ENCODE measurements at regions of chr17 and their contacts with region 1.

Region 1: DNA sequence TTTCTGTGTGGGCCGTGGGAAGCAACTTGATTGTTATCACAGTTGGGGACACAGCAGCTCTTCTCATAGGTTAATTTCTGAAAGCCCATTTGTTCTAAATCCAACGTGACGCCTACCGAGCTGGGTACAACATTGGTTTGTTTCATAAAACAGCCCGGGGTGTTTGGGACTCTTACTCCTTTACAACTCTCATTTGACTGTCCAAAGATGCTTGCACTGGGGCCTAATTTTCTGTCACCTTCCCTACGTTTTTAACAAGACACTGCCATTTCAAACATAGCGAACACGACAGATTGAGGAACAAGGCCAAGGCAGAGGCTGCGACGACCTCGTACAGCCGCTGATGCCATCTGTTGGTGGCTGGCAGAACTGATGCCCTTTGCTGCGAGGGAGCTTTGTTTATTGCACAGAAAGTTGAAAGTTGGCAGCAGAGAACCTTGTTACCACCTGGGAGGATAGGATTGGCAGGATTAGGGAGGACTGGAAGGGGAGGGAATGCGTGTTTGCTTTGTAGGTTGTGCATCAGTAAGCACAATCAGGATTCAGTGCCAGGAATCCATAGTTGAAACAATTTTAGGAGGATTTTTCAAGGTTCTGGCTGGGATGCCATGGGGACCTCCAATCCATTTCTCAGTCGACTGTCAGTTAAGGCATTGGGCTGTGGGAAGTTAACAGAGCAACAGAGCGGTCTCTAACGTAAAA is 98.3 kb downstream of the PITPNC1 start:
- DNase-seq: peak; percentile 79 to 94 (median 84)
- ATAC-seq: peak; percentile 86
- H3K4me3 ChIP-seq: peak overlapping the region; percentile 35
- H3K4me3 Mint-ChIP-seq: peak overlapping the region; percentile 74
- H3K27ac ChIP-seq: peak overlapping the region; percentile 66 to 73
- H3K27ac Mint-ChIP-seq: peak overlapping the region; percentile 96
- H3K4me1 ChIP-seq: peaks cover 64% of the 10 kb centered on the region
- H3K4me1 Mint-ChIP-seq: peaks cover 66% of the 10 kb centered on the region
- H3K27me3 ChIP-seq: no peaks in the 10 kb centered on the region
- H3K27me3 Mint-ChIP-seq: no peaks in the 10 kb centered on the region
- CTCF ChIP-seq: peak; percentile 96

Region 2: GRCh38 chr17:67151717-67152116 is 323.7 kb before region 1 on chr17:
- CTCF ChIA-PET with region 1: no interaction called
- POLR2A ChIA-PET with region 1: no interaction called
- intact Hi-C with region 1: no loop called
- DNase-seq: no peak
- ATAC-seq: no peak
- H3K4me3 ChIP-seq: no peak overlapping the region
- H3K4me3 Mint-ChIP-seq: no peak overlapping the region
- H3K27ac ChIP-seq: no peak overlapping the region
- H3K27ac Mint-ChIP-seq: no peak overlapping the region
- H3K4me1 ChIP-seq: no peaks in the 10 kb centered on the region
- H3K4me1 Mint-ChIP-seq: peaks cover 4% of the 10 kb centered on the region
- H3K27me3 ChIP-seq: no peaks in the 10 kb centered on the region
- H3K27me3 Mint-ChIP-seq: no peaks in the 10 kb centered on the region
- CTCF ChIP-seq: no peak

Region 3: GRCh38 chr17:67400193-67400592 is 75.2 kb before region 1 on chr17:
- CTCF ChIA-PET with region 1: interaction called, 15 read pairs
- POLR2A ChIA-PET with region 1: interaction called, 11 read pairs
- intact Hi-C with region 1: no loop called
- DNase-seq: peak in 4 of 14 experiments; percentile 34 to 72 (median 60)
- ATAC-seq: peak; percentile 50
- H3K4me3 ChIP-seq: no peak overlapping the region
- H3K4me3 Mint-ChIP-seq: peak overlapping the region; percentile 65
- H3K27ac ChIP-seq: peak overlapping the region; percentile 31 to 77
- H3K27ac Mint-ChIP-seq: peak overlapping the region; percentile 99
- H3K4me1 ChIP-seq: peaks cover 52% of the 10 kb centered on the region
- H3K4me1 Mint-ChIP-seq: peaks cover 77% of the 10 kb centered on the region
- H3K27me3 ChIP-seq: no peaks in the 10 kb centered on the region
- H3K27me3 Mint-ChIP-seq: no peaks in the 10 kb centered on the region
- CTCF ChIP-seq: no peak

Region 4: DNA sequence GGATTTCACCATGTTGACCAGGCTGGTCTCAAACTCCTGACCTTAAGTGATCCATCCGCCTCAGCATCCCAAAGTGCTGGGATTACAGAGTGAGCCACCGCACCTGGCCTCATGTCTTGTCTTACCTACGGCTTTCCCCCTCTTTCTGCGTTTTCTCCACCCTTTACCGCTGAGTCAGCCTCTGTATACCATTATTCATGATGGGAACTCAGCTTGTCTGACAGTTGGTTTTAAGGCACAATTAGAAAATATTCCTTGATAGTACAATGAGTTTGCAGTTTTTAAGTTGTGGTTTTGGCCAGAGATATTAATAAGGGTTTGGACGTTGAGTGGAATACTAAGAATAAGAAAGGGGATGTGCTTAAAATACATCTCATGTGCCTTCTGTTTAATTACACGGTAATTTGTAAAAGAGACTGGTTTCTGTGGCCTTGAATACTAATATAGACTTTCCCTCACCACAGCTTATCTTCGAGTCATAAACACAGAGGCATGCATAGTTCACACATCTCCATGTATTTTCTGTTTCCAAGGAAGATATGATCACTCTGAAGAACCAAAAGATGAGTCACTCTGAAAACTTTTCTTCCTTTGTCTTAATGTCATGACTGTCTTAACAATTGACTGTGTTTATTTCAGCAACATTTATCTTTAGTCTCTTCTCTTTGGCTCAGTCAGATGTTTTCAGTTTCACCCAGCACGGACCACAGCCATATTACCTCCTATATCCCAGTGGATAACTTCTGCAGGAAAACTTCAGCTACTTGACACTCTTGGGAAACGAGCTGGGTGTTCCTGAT is 43.9 kb before region 1 on chr17:
- CTCF ChIA-PET with region 1: interaction called, 42 read pairs
- POLR2A ChIA-PET with region 1: interaction called, 20 read pairs
- intact Hi-C with region 1: loop called in 1 of 2 experiments (anchors 10 kb)
- DNase-seq: peak in 3 of 14 experiments; percentile 41 to 56 (median 45)
- ATAC-seq: peak; percentile 5
- H3K4me3 ChIP-seq: no peak overlapping the region
- H3K4me3 Mint-ChIP-seq: peak overlapping the region; percentile 8
- H3K27ac ChIP-seq: no peak overlapping the region
- H3K27ac Mint-ChIP-seq: peak overlapping the region; percentile 91
- H3K4me1 ChIP-seq: peaks cover 59% of the 10 kb centered on the region
- H3K4me1 Mint-ChIP-seq: peaks cover 82% of the 10 kb centered on the region
- H3K27me3 ChIP-seq: no peaks in the 10 kb centered on the region
- H3K27me3 Mint-ChIP-seq: no peaks in the 10 kb centered on the region
- CTCF ChIP-seq: no peak

Region 5: DNA sequence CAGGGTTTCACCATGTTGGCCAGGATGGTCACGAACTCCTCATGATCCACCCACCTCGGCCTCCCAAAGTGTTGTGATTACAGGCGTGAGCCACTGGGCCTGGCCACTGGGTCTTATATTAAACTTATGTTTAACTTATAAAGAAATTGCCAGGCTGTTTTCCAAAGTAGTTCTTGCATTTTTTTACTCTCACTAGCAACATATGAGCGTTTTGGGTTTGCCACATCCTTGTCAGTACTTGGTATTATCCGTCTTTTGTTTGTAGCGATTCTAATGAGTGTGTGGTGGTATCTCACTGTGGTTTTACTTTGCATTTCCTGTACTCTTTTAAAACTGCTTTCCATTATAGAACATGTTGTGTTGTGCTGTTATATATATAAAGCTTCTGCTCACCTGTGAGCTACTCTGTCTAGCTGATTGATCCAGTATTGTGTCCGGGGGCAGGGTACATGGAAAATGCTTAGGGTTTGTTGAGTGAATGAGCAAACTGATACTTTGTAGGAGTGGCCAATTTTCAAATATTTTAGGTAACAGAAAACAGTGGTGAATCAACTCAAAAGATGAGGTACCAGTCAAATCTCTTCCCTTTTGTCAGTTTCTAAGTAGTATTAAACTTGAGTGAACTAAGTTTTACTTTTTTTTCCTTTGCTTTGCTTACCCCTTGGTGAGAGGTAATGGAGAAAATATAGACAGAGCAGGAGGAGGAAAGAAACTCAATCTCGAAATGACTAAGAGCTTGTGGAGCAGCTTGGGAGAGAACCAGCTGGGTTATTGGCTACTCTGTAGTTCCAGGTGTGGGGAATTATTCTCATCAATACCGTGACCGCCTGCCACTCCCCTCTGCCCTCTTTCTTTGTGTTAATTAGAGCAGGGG is 22.5 kb before region 1 on chr17:
- CTCF ChIA-PET with region 1: interaction called, 21 read pairs
- POLR2A ChIA-PET with region 1: interaction called, 41 read pairs
- intact Hi-C with region 1: loop called (anchors 1 to 2 kb)
- DNase-seq: peak in 3 of 14 experiments; percentile 74 to 91 (median 76)
- ATAC-seq: peak; percentile 90
- H3K4me3 ChIP-seq: peak overlapping the region; percentile 9
- H3K4me3 Mint-ChIP-seq: peak overlapping the region; percentile 85
- H3K27ac ChIP-seq: peak overlapping the region; percentile 20 to 71
- H3K27ac Mint-ChIP-seq: peak overlapping the region; percentile 91
- H3K4me1 ChIP-seq: peaks cover 81% of the 10 kb centered on the region
- H3K4me1 Mint-ChIP-seq: peaks cover 95% of the 10 kb centered on the region
- H3K27me3 ChIP-seq: no peaks in the 10 kb centered on the region
- H3K27me3 Mint-ChIP-seq: no peaks in the 10 kb centered on the region
- CTCF ChIP-seq: no peak

Region 6: GRCh38 chr17:67602956-67603355 is 127.6 kb after region 1 on chr17:
- CTCF ChIA-PET with region 1: interaction called, 10 read pairs
- POLR2A ChIA-PET with region 1: no interaction called
- intact Hi-C with region 1: loop called (anchors 5 kb)
- DNase-seq: peak; percentile 9 to 72 (median 33)
- ATAC-seq: peak; percentile 99
- H3K4me3 ChIP-seq: no peak overlapping the region
- H3K4me3 Mint-ChIP-seq: no peak overlapping the region
- H3K27ac ChIP-seq: no peak overlapping the region
- H3K27ac Mint-ChIP-seq: peak overlapping the region; percentile 32
- H3K4me1 ChIP-seq: no peaks in the 10 kb centered on the region
- H3K4me1 Mint-ChIP-seq: peaks cover 25% of the 10 kb centered on the region
- H3K27me3 ChIP-seq: no peaks in the 10 kb centered on the region
- H3K27me3 Mint-ChIP-seq: no peaks in the 10 kb centered on the region
- CTCF ChIP-seq: peak; percentile 58

Measured in CD4-positive, alpha-beta T cell (primary cell).